ENCODE measurements at regions of chr9 and their contacts with region 1.

Region 1: DNA sequence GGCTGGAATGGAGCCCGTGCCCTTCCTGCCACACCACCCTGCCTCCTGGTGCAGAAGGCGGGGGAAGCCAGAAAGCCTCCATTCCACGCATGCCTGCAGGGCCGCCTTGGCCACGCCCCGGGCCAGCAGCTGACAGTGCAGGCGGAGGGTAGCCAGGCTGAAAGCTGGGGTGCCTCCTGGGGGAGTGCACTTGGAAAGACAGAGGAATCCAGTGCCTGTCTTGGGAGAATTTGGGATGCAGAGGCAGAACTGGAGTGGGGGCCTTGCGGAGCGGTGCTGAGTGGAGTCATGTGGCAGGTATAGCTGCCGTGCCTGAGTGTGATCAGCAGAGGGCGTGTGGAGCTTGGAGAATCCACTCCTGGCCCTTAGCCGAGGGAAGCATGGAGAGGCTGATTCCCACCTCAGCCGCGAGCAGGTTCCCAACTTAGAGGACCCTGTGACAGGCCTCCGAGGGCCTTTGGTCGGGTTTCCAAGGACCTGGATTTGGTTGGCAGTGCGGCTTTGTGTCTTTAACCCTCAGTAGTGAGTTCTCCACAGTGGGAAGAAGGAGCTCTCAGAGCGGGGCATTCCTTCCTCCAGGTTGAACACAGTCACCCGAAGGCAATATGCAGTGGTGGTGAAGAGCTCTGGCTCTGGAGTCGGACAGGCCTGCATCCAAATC is 9.1 kb upstream of the URM1 start:
- DNase-seq: peak; percentile 78
- ATAC-seq: peak; percentile 90
- H3K4me3 ChIP-seq: peak overlapping the region; percentile 30
- H3K27ac ChIP-seq: peak overlapping the region; percentile 31
- H3K4me1 ChIP-seq: peaks cover 10% of the 10 kb centered on the region; the same call in 1 of the 2 replicates
- H3K27me3 ChIP-seq: no peaks in the 10 kb centered on the region
- CTCF ChIP-seq: peak; percentile 89
- POLR2A ChIP-seq: no peak
- RAD21 ChIP-seq: peak; percentile 88

Region 2: GRCh38 chr9:128396970-128397613 is 35.0 kb after region 1 on chr9:
- CTCF ChIA-PET with region 1: interaction called, 4 read pairs
- POLR2A ChIA-PET with region 1: interaction called, 18 read pairs
- dilution Hi-C with region 1: no loop called
- in situ Hi-C with region 1: no loop called
- intact Hi-C with region 1: no loop called
- DNase-seq: no peak
- ATAC-seq: peak; percentile 42; the same call in 1 of the 2 replicates
- H3K4me3 ChIP-seq: no peak overlapping the region
- H3K27ac ChIP-seq: no peak overlapping the region
- H3K4me1 ChIP-seq: no peaks in the 10 kb centered on the region
- H3K27me3 ChIP-seq: peaks cover 16% of the 10 kb centered on the region
- CTCF ChIP-seq: no peak
- POLR2A ChIP-seq: no peak
- RAD21 ChIP-seq: no peak

Region 3: GRCh38 chr9:128412120-128412790 is 50.1 kb after region 1 on chr9:
- CTCF ChIA-PET with region 1: interaction called, 7 read pairs
- POLR2A ChIA-PET with region 1: no interaction called
- dilution Hi-C with region 1: no loop called
- in situ Hi-C with region 1: no loop called
- intact Hi-C with region 1: loop called (anchors 1 kb)
- DNase-seq: peak; percentile 31
- ATAC-seq: peak; percentile 76
- H3K4me3 ChIP-seq: no peak overlapping the region
- H3K27ac ChIP-seq: no peak overlapping the region
- H3K4me1 ChIP-seq: no peaks in the 10 kb centered on the region
- H3K27me3 ChIP-seq: peaks cover 24% of the 10 kb centered on the region
- CTCF ChIP-seq: peak; percentile 68
- POLR2A ChIP-seq: no peak
- RAD21 ChIP-seq: peak; percentile 84